Dendritic cell treated with granulocyte-macrophage colony-stimulating factor and Interleukin-4, amounts not matched to agents 40 ng/mL and 50 ng/mL, for 4 days (primary cell): ENCODE measurements at regions of chr9 and their contacts with region 1.

Region 1: GRCh38 chr9:107674721-107675277 is 185.2 kb upstream of the KLF4 start:
- H3K4me3 Mint-ChIP-seq: peak overlapping the region; percentile 48
- H3K27ac Mint-ChIP-seq: peak overlapping the region; percentile 96
- H3K4me1 Mint-ChIP-seq: peaks cover 47% of the 10 kb centered on the region
- H3K27me3 Mint-ChIP-seq: no peaks in the 10 kb centered on the region

Region 2: GRCh38 chr9:106962615-106963363 is 712.0 kb before region 1 on chr9:
- intact Hi-C with region 1: no loop called
- H3K4me3 Mint-ChIP-seq: no peak overlapping the region
- H3K27ac Mint-ChIP-seq: no peak overlapping the region
- H3K4me1 Mint-ChIP-seq: no peaks in the 10 kb centered on the region
- H3K27me3 Mint-ChIP-seq: no peaks in the 10 kb centered on the region

Region 3: GRCh38 chr9:107637421-107638420 is 37.1 kb before region 1 on chr9:
- intact Hi-C with region 1: loop called (anchors 2 kb)
- H3K4me3 Mint-ChIP-seq: peak overlapping the region; percentile 86
- H3K27ac Mint-ChIP-seq: peak overlapping the region; percentile 99
- H3K4me1 Mint-ChIP-seq: peaks cover 53% of the 10 kb centered on the region
- H3K27me3 Mint-ChIP-seq: no peaks in the 10 kb centered on the region